ENCODE measurements at regions of chr1 and their contacts with region 1.

Region 1: GRCh38 chr1:17125756-17126237 is 6.5 kb upstream of the PADI2 start:
- DNase-seq: peak; percentile 90
- H3K4me3 ChIP-seq: peak overlapping the region in 1 of 2 experiments; percentile 12; a peak in 1 of 4 replicates
- H3K27ac ChIP-seq: no peak overlapping the region
- H3K4me1 ChIP-seq: peaks cover 0 to 32% of the 10 kb centered on the region in 2 experiments; a peak in 3 of 4 replicates
- H3K27me3 ChIP-seq: no peaks in the 10 kb centered on the region
- CTCF ChIP-seq: peak; percentile 94
- EP300 ChIP-seq: no peak
- RAD21 ChIP-seq: peak; percentile 97

Region 2: DNA sequence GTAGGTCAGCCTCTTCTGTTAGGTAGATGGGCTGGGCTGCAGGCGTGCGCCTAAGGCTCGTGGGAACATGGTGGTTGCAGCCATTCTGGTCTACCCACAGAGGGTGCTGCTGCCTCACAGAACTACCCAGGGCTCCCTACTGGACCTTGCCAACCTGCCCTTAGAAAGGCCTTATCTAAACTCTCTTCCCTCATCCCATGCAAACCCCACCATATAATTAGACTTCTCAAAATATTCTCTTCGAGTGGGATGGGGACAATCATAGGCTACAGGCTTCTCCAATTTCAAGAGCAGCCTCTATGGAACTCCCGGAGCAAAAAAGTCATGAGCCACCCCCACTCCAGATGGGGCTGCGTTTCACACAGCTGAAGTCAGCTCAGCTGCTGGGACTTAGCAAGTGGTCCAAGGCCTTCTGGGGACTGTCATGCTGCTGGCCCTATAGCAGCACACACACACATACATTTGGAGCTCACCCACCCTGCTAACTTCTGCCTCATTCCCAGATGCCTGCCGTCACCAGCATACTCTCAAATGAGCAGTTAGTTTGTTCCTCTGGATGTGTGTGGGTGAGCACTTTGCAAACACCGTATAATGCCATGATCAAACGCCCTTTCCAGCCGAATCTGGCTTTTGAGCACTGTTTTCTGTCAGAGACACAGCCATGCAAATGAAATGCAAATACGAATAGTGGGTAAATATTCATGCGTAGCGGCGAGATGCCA is 65.9 kb before region 1 on chr1:
- CTCF ChIA-PET with region 1: interaction called, 10 read pairs
- POLR2A ChIA-PET with region 1: no interaction called
- DNase-seq: peak; percentile 78
- H3K4me3 ChIP-seq: no peak overlapping the region
- H3K27ac ChIP-seq: no peak overlapping the region
- H3K4me1 ChIP-seq: no peaks in the 10 kb centered on the region
- H3K27me3 ChIP-seq: peaks cover 8% of the 10 kb centered on the region; the same call in 1 of the 2 replicates
- CTCF ChIP-seq: peak; percentile 77
- EP300 ChIP-seq: no peak
- RAD21 ChIP-seq: peak; percentile 94

Region 3: DNA sequence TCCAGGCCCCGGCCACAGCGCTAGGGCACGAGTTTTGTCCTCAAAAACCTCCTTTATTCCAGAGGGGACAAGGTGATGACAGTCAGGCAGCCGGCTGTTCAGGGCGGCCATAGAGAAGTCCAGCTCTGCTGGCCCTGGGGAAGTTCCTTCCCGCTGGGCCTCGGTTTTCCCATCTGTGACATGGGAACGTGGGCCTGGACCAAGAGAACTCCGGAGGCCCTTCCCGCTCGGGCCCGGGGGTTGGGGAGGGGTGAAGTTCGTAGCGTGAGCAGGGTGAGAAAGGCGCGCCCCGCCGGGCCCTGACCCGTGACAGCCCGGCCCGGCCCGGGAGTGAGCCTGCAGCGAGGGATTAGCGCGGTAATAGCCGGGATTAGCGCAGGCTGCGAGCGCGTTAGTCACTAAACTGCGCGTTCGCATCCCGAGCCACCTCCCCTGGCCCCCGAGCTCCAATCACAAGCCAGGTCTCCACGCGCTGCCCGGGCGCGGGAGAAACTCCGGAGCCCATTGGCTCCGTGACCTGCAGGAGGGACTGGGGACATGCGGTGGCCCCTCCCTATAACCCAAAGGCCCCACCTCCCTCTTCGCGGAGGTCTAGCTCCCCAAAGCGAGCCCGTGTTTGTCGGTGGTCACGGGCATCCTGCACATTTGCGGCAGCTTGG is 23.3 kb after region 1 on chr1:
- CTCF ChIA-PET with region 1: interaction called, 13 read pairs
- POLR2A ChIA-PET with region 1: no interaction called
- DNase-seq: peak; percentile 54
- H3K4me3 ChIP-seq: no peak overlapping the region
- H3K27ac ChIP-seq: no peak overlapping the region
- H3K4me1 ChIP-seq: no peaks in the 10 kb centered on the region
- H3K27me3 ChIP-seq: no peaks in the 10 kb centered on the region
- CTCF ChIP-seq: no peak
- EP300 ChIP-seq: no peak
- RAD21 ChIP-seq: no peak

Region 4: DNA sequence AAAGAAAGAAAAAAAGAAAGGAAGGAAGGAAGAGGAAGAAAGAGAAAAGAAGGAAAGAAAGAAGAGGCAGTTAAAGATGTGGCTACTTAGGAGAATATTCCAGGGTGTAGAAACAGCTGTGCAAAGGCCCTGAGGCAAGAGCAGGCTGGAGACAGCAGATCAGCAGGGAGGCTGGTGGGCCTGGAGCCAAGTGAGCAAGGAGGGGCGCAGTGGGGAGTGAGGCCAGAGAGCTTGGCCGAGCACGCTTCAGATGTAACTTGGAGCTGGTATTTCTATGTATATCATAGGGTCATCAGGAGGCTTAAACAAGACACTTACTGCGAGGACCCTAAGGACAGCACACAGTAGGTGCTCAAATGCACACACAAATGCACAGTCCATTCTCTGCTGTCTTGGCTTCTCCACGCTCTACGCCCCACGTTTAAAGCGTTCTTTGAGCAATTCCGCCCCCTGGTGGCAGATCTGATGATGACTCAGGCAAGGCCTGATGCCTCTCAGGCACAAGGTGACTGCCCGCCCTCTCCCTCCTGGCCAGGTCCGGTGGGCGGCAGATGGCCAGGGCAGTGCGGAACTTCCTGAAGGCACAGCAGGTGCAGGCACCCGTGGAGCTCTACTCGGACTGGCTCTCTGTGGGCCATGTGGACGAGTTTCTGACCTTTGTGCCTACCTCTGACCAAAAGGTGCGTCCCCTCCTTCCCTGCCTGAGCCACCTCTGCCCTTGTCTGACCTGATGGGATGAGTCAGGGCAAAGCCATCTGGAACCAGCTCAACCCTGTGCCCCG is 111.2 kb after region 1 on chr1:
- CTCF ChIA-PET with region 1: interaction called, 462 read pairs
- POLR2A ChIA-PET with region 1: no interaction called
- DNase-seq: peak; percentile 86
- H3K4me3 ChIP-seq: no peak overlapping the region; a peak in 1 of 4 replicates
- H3K27ac ChIP-seq: no peak overlapping the region
- H3K4me1 ChIP-seq: peaks cover 13 to 28% of the 10 kb centered on the region in 2 experiments; a peak in 2 of 4 replicates
- H3K27me3 ChIP-seq: no peaks in the 10 kb centered on the region
- CTCF ChIP-seq: peak; percentile 89
- EP300 ChIP-seq: no peak
- RAD21 ChIP-seq: peak; percentile 90

Region 5: GRCh38 chr1:17335821-17336710 is 210.3 kb after region 1 on chr1:
- CTCF ChIA-PET with region 1: interaction called, 60 read pairs
- POLR2A ChIA-PET with region 1: no interaction called
- DNase-seq: peak; percentile 62
- H3K4me3 ChIP-seq: no peak overlapping the region; a peak in 1 of 4 replicates
- H3K27ac ChIP-seq: no peak overlapping the region
- H3K4me1 ChIP-seq: no peaks in the 10 kb centered on the region
- H3K27me3 ChIP-seq: peaks cover 3% of the 10 kb centered on the region; the same call in 1 of the 2 replicates
- CTCF ChIP-seq: peak; percentile 95
- EP300 ChIP-seq: no peak
- RAD21 ChIP-seq: peak; percentile 68

Region 6: DNA sequence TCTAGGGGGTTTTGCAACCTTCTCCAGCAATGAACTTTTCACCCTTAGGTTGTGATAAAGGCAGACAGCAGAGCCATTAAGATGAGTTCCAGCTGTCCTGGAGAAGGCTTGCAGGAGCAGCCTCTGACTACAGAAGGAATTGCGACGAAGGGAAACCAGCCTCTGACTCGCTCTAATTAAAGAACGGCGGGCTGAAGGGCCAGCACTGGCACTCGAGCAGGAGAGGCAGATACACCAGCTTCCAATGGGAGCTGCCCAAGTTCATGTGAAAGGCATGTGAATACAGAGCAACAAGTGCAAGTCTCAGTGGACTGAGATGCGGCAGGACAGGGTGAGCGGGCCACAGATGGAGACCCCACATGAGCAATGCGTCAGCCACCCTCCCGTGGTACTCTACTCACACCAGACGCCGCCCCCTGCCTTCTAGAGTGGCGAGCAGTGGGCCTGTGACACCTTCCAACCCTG is 298.0 kb after region 1 on chr1:
- CTCF ChIA-PET with region 1: no interaction called
- POLR2A ChIA-PET with region 1: no interaction called
- DNase-seq: no peak
- H3K4me3 ChIP-seq: no peak overlapping the region
- H3K27ac ChIP-seq: no peak overlapping the region; a peak in 1 of 4 replicates
- H3K4me1 ChIP-seq: peaks cover 0 to 11% of the 10 kb centered on the region in 2 experiments; a peak in 1 of 4 replicates
- H3K27me3 ChIP-seq: no peaks in the 10 kb centered on the region
- CTCF ChIP-seq: no peak
- EP300 ChIP-seq: no peak
- RAD21 ChIP-seq: no peak

Measured in SK-N-SH (cell line).